ENCODE measurements at regions of chr4 and their contacts with region 1.

Region 1: GRCh38 chr4:145618932-145619638 is at the start of gene MMAA:
- DNase-seq: peak; percentile 98
- ATAC-seq: peak; percentile 84
- H3K4me3 Mint-ChIP-seq: peak within 1 kb of the TSS; percentile 95
- H3K27ac Mint-ChIP-seq: peak within 1 kb of the TSS; percentile 97
- H3K4me1 Mint-ChIP-seq: peaks cover 49% of the 10 kb centered on the region
- H3K27me3 Mint-ChIP-seq: no peaks in the 10 kb centered on the region
- total RNA-seq, gene MMAA: 19.2 to 20.8 TPM

Region 2: GRCh38 chr4:144174401-144175067 is 1444.6 kb before region 1 on chr4:
- CTCF ChIA-PET with region 1: interaction called, 4 read pairs
- POLR2A ChIA-PET with region 1: no interaction called
- intact Hi-C with region 1: loop called (anchors 2 to 10 kb)
- DNase-seq: peak; percentile 42
- ATAC-seq: peak; percentile 84
- H3K4me3 Mint-ChIP-seq: no peak overlapping the region
- H3K27ac Mint-ChIP-seq: peak overlapping the region; percentile 72
- H3K4me1 Mint-ChIP-seq: peaks cover 17% of the 10 kb centered on the region
- H3K27me3 Mint-ChIP-seq: peaks cover 3% of the 10 kb centered on the region

Region 3: GRCh38 chr4:145107126-145107525 is 512.0 kb before region 1 on chr4:
- CTCF ChIA-PET with region 1: no interaction called
- POLR2A ChIA-PET with region 1: no interaction called
- intact Hi-C with region 1: no loop called
- DNase-seq: no peak
- ATAC-seq: no peak
- H3K4me3 Mint-ChIP-seq: no peak overlapping the region
- H3K27ac Mint-ChIP-seq: no peak overlapping the region
- H3K4me1 Mint-ChIP-seq: peaks cover 14% of the 10 kb centered on the region
- H3K27me3 Mint-ChIP-seq: no peaks in the 10 kb centered on the region

Region 4: GRCh38 chr4:145299380-145300076 is 319.6 kb before region 1 on chr4:
- CTCF ChIA-PET with region 1: no interaction called
- POLR2A ChIA-PET with region 1: no interaction called
- intact Hi-C with region 1: loop called in 1 of 2 experiments (anchors 2 kb)
- DNase-seq: peak; percentile 90
- ATAC-seq: peak; percentile 97
- H3K4me3 Mint-ChIP-seq: no peak overlapping the region
- H3K27ac Mint-ChIP-seq: no peak overlapping the region
- H3K4me1 Mint-ChIP-seq: peaks cover 20% of the 10 kb centered on the region
- H3K27me3 Mint-ChIP-seq: peaks cover 8% of the 10 kb centered on the region

Region 5: DNA sequence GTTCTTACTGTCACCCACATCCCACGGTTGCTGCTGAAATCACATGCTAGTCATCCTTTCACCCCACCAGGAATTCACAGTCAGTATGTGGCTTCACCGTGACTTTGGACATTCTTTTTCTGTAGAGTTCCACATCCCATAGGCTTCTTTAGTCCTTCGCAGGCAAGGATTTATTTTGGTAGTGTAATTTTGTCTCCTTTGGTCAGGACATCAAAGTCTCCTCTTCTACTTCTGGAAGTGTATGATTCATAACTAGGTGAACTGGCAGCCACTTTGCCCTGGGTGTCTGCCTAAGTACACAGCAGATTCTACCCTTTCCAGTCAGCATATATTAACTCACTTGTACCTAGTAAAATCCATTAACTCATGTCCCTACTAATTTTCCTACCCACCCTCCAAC is 38.2 kb before region 1 on chr4:
- CTCF ChIA-PET with region 1: no interaction called
- POLR2A ChIA-PET with region 1: no interaction called
- intact Hi-C with region 1: no loop called
- DNase-seq: no peak
- ATAC-seq: no peak
- H3K4me3 Mint-ChIP-seq: no peak overlapping the region
- H3K27ac Mint-ChIP-seq: no peak overlapping the region
- H3K4me1 Mint-ChIP-seq: no peaks in the 10 kb centered on the region
- H3K27me3 Mint-ChIP-seq: peaks cover 9% of the 10 kb centered on the region

Region 6: GRCh38 chr4:145732895-145733880 is 114.1 kb after region 1 on chr4:
- CTCF ChIA-PET with region 1: no interaction called
- POLR2A ChIA-PET with region 1: no interaction called
- intact Hi-C with region 1: loop called (anchors 1 to 5 kb)
- DNase-seq: peak; percentile 92
- ATAC-seq: peak; percentile 92
- H3K4me3 Mint-ChIP-seq: peak overlapping the region; percentile 65
- H3K27ac Mint-ChIP-seq: peak overlapping the region; percentile 56
- H3K4me1 Mint-ChIP-seq: peaks cover 23% of the 10 kb centered on the region
- H3K27me3 Mint-ChIP-seq: no peaks in the 10 kb centered on the region

Region 7: DNA sequence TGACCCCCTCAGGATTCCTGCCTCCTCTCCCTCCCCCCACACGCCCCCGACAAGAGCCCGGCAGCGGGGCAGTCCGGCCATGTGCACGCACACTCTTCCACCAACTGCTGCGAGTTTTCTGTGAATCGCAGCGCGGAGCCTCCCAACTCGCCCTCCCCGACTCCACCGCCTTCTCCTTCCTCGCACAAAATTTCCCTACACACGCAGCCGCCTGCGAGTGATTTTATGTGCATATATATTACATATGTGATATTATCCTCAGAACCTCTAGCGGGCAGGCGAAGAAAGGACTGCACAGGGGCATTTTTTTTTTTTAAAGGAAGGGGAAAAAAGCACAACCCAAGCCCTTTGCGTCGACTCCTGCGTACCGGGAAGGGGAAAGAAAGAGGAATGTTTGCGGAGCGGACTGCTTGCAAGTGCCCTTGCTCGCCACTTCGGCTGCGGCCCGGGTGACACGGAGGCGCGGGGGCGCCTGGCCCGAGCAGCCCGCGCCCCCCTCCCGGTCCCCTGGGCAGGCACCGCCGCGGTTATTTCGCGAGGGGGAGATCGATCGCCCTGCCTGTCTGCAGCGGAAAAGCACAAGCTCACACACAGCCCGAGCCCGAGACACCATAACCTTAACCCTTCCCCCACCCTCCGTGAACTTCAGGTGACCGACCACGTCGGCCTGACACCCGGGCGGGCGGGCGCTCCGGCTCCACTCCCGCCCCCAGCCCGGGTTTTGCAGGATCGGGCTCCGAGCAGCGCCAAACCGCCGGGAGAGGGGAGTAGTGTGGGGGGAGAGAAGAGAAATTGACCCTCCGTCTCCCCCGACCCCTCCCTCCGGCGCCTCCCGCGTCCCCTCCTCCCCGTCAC is 317.3 kb after region 1 on chr4:
- CTCF ChIA-PET with region 1: interaction called, 4 read pairs
- POLR2A ChIA-PET with region 1: no interaction called
- intact Hi-C with region 1: loop called (anchors 1 kb)
- DNase-seq: peak; percentile 77
- ATAC-seq: peak; percentile 41
- H3K4me3 Mint-ChIP-seq: peak overlapping the region; percentile 97
- H3K27ac Mint-ChIP-seq: peak overlapping the region; percentile 93
- H3K4me1 Mint-ChIP-seq: peaks cover 54% of the 10 kb centered on the region
- H3K27me3 Mint-ChIP-seq: no peaks in the 10 kb centered on the region

Region 8: DNA sequence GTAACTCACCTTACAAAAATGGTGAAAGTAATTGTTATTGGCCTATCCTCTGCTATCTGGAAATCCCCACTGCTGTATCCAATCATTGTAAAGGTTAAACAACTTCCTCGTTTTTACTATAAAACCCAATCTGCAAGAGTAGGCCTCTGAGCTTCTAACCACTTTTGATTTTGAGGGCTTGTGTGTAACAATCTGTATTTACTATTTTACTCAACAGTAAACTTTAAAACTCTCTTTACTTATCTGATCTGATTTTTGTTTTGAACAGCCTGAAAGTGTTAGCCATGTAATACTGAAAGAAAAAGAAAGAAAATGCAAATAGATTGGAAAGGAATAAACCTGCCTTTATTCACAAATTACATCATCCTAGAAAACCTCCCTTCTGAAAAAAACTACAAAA is 839.5 kb after region 1 on chr4:
- CTCF ChIA-PET with region 1: no interaction called
- POLR2A ChIA-PET with region 1: no interaction called
- intact Hi-C with region 1: loop called in 1 of 2 experiments (anchors 10 kb)
- DNase-seq: no peak
- ATAC-seq: peak; percentile 96
- H3K4me3 Mint-ChIP-seq: peak overlapping the region; percentile 62
- H3K27ac Mint-ChIP-seq: peak overlapping the region; percentile 93
- H3K4me1 Mint-ChIP-seq: peaks cover 24% of the 10 kb centered on the region
- H3K27me3 Mint-ChIP-seq: no peaks in the 10 kb centered on the region

Measured in activated CD4-positive, alpha-beta T cell treated with anti-CD3 and anti-CD28 coated beads for 36 hours (primary cell).